ENCODE measurements at regions of chr15 and their contacts with region 1.

Region 1: GRCh38 chr15:68817304-68818065 is 3.2 kb downstream of the ANP32A start:
- DNase-seq: no peak
- H3K4me3 ChIP-seq: peak overlapping the region; percentile 74 to 94 (median 82)
- H3K27ac ChIP-seq: peak overlapping the region; percentile 94 to 98 (median 98)
- H3K4me1 ChIP-seq: peaks cover 39 to 53% (median 48%) of the 10 kb centered on the region in 4 donors
- H3K27me3 ChIP-seq: no peaks in the 10 kb centered on the region
- CTCF ChIP-seq: no peak
- EP300 ChIP-seq: no peak
- POLR2A ChIP-seq: no peak

Region 2: GRCh38 chr15:68730471-68730919 is 87.0 kb before region 1 on chr15:
- intact Hi-C with region 1: loop called (anchors 5 kb)
- DNase-seq: no peak
- H3K4me3 ChIP-seq: no peak overlapping the region
- H3K27ac ChIP-seq: peak overlapping the region; percentile 30 to 72 (median 65)
- H3K4me1 ChIP-seq: peaks cover 29 to 50% (median 42%) of the 10 kb centered on the region in 4 donors
- H3K27me3 ChIP-seq: no peaks in the 10 kb centered on the region
- CTCF ChIP-seq: peak; percentile 42 to 56 (median 55)
- EP300 ChIP-seq: no peak
- POLR2A ChIP-seq: no peak

Region 3: DNA sequence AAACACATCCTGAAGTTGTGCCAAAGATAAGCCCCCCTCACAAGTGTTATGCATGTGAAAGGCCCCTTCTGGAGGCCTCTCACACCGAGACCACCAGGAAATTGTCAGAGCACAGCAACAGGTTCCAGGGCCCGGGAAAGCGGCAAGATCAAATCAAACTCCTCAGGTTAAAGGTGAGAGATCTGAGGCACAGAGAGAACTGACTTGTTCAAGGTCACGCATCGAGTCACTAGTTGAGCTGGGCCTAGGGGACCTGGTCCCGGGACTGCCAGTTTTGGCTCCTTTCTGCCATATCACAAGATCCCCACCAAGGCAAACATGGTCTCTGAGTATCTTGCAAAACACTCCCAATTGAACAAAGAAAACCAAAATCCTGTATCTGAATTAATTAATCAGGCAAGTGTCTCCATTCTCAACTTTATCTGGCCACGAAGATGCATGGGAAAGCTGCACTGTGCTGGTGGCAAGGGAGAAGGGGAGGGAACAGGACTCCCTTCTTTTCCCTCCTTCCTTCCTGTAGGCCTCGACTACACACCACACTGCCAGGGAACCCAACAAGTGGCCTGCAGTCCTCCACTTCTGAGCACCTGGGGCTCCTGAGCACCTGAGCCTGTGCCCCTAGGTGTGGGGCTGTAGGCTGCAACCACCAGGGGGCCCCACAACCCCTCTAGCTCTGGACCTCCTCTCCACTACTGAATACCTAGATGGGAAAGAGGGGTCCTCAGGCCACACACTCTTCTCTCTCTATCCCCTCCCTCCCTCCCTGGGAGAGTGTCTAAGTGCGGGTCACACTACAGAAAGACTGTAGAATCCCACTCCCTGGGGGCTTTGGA is 34.0 kb before region 1 on chr15:
- intact Hi-C with region 1: loop called (anchors 5 kb)
- DNase-seq: no peak
- H3K4me3 ChIP-seq: no peak overlapping the region
- H3K27ac ChIP-seq: no peak overlapping the region
- H3K4me1 ChIP-seq: peaks cover 0 to 18% (median 10%) of the 10 kb centered on the region in 4 donors
- H3K27me3 ChIP-seq: no peaks in the 10 kb centered on the region
- CTCF ChIP-seq: peak; percentile 60 to 73 (median 72)
- EP300 ChIP-seq: no peak
- POLR2A ChIP-seq: no peak

Region 4: DNA sequence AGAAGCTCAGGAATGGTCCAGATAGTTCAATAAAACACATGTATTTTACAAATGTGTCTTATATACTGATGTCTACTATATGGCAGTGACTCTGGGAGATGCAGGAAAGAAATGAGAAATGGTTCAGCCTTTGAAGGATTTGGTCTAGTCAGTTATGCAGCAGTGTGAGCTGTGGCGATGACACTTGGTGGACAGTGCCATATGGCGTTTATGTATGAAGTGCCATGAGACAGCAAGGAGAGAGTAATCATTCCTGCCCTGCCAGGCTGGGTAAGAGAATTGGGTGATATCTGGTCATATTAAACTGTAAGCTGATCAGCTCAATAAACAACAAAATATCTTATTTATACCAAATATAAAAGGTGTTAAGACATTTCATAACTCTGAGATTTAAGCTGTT is 50.8 kb after region 1 on chr15:
- intact Hi-C with region 1: no loop called
- DNase-seq: no peak
- H3K4me3 ChIP-seq: no peak overlapping the region
- H3K27ac ChIP-seq: no peak overlapping the region
- H3K4me1 ChIP-seq: no peaks in the 10 kb centered on the region
- H3K27me3 ChIP-seq: peaks cover 0 to 18% (median 0%) of the 10 kb centered on the region in 4 donors
- CTCF ChIP-seq: no peak
- EP300 ChIP-seq: no peak
- POLR2A ChIP-seq: no peak

Region 5: DNA sequence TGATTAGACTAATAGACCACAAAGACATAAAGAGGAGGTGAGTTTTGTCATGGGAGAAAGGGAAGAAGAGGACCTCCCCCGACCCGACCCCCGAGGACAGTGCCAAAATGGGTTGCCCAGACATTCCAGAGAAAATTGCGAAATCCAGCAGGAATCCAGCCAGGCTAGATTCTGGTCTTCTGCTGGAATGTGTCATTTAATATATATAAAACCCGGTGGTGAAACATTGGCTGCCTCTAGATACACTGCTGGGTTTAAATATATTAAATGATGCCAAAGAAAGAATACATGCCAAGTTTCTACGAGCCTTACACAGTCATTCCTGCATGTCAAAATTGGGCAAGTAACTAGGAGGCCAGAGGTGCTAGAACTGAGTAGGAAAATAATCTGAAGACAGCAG is 67.6 kb after region 1 on chr15:
- intact Hi-C with region 1: no loop called
- DNase-seq: peak; percentile 74
- H3K4me3 ChIP-seq: no peak overlapping the region
- H3K27ac ChIP-seq: no peak overlapping the region
- H3K4me1 ChIP-seq: peaks cover 7 to 15% (median 11%) of the 10 kb centered on the region in 4 donors
- H3K27me3 ChIP-seq: no peaks in the 10 kb centered on the region
- CTCF ChIP-seq: no peak
- EP300 ChIP-seq: no peak
- POLR2A ChIP-seq: no peak

Region 6: DNA sequence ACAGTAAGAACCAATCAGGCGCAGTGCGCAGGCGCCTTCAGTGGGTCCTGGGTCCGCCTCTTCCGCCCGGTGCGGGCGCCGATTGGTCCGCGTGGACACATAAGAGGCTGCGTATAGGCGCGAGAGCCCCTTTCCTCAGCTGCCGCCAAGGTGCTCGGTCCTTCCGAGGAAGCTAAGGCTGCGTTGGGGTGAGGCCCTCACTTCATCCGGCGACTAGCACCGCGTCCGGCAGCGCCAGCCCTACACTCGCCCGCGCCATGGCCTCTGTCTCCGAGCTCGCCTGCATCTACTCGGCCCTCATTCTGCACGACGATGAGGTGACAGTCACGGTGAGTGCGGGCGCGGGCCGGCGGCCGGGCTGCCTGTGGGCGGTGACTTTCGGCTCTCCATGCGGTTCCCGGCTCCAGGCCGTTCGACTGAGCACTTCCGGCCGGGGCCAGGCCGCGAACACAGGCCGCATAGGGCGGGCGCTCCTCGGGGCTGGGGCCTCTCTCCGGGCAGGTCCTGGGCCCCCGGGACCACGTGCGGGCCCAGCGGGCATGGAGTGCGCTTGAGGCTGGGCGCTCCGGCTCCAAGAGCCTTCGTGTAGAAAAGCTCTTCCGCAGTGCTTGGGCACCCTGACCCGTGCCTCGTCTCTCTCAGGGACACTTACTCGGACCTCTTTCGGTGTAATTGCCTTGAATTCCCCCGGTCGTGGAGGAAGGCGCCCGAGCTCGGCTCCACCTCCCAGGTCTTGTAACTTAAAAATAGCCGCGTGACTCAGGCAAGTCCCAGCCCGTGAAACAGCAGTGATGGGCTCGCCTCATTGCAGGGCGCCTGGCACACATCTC is 635.4 kb after region 1 on chr15 and contains the start of gene RPLP1:
- intact Hi-C with region 1: loop called (anchors 5 kb)
- DNase-seq: peak; percentile 99
- H3K4me3 ChIP-seq: peak within 1 kb of the TSS; percentile 71 to 87 (median 82)
- H3K27ac ChIP-seq: peak within 1 kb of the TSS; percentile 84 to 96 (median 93)
- H3K4me1 ChIP-seq: peaks cover 28 to 43% (median 32%) of the 10 kb centered on the region in 4 donors
- H3K27me3 ChIP-seq: no peaks in the 10 kb centered on the region
- CTCF ChIP-seq: no peak
- EP300 ChIP-seq: no peak
- POLR2A ChIP-seq: peak; percentile 93
- total RNA-seq, gene RPLP1: 460 to 623 (median 514) TPM